HCT116 (cell line): ENCODE measurements at regions of chr1 and their contacts with region 1.

Region 1: DNA sequence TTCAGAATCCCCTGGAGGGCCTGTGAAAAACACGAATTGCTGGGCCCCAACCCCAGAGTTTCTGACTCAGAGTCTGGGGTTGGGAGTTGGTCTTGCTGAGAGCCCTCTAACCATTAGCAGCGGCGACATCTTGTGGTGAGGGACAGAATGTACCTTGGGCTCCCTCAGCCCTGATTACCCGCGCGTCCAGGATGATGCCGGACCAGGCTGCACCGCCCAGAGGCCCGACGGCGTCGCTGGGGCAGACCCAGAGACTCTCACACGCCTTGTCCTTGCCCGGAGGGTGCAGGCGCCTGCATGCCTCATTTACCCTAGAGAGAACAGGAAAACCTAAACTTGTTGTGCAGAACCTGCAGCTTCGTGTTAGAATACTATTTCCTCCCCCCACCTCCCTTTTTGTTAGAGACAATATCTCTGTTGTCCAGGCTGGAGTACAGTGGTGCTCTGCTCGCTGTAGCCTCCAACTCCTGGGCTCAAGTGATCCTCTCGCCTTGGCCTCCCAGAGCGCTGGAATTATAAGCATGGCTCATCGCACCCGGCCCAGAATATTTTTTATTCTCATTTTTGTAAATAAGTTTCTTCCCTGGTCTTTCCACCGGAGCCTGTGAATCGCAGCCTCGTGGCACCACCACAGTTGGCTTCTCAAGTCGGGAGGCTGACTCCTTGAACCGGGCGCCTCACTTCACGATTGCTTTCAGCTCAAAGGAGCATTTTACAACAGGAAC is 22.2 kb upstream of the RD3 start:
- DNase-seq: peak; percentile 71
- ATAC-seq: peak; percentile 76
- H3K4me3 ChIP-seq: peak overlapping the region in 1 of 2 experiments; percentile 26; a peak in 1 of 4 replicates
- H3K27ac ChIP-seq: peak overlapping the region; percentile 51; the same call in 1 of the 2 replicates
- H3K4me1 ChIP-seq: peaks cover 36 to 46% of the 10 kb centered on the region in 2 experiments
- H3K27me3 ChIP-seq: no peaks in the 10 kb centered on the region
- CTCF ChIP-seq: peak; percentile 74 to 88 (median 80)
- POLR2A ChIP-seq: no peak
- RAD21 ChIP-seq: peak; percentile 96

Region 2: GRCh38 chr1:210407207-210407886 is 1106.8 kb before region 1 on chr1:
- CTCF ChIA-PET with region 1: no interaction called
- POLR2A ChIA-PET with region 1: no interaction called
- RAD21 ChIA-PET with region 1: no interaction called
- intact Hi-C with region 1: loop called (anchors 2 kb)
- DNase-seq: peak; percentile 27
- ATAC-seq: peak; percentile 92
- H3K4me3 ChIP-seq: no peak overlapping the region
- H3K27ac ChIP-seq: no peak overlapping the region
- H3K4me1 ChIP-seq: no peaks in the 10 kb centered on the region
- H3K27me3 ChIP-seq: no peaks in the 10 kb centered on the region
- CTCF ChIP-seq: peak; percentile 73 to 97 (median 88)
- POLR2A ChIP-seq: no peak
- RAD21 ChIP-seq: peak; percentile 91

Region 3: DNA sequence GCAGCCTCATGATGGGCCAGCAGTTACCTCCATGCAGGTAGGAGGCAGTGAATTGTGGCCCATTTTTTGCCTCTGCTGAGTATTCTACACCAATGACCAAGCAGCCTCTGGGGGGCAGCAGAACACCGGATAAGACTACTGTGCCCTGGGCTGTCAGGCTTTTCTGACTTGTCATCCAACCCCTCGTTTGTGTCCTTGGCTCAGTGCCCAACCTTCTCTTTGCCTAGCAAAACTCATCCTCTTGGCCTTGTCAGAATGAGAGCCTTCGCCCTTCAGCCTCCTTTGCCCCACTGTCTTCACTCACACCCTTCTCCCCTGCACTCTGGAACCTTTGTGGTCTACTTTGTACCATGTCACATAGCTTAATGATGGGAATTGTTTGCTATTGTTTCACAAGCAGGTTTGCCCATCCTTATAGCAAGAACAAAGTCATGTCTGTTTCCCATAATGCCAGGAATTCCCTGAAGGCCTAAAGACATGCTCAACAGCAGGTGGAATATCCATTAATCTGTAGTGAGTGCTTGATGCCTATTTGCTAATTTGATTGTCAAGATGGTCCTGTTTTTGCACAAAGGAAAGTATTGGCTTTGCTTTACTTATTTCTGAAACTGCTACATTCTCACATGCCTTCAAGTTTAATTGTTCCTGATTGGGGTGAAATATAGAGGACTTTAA is 929.6 kb before region 1 on chr1:
- CTCF ChIA-PET with region 1: no interaction called
- POLR2A ChIA-PET with region 1: no interaction called
- RAD21 ChIA-PET with region 1: no interaction called
- intact Hi-C with region 1: loop called (anchors 5 kb)
- DNase-seq: peak; percentile 54
- ATAC-seq: peak; percentile 99
- H3K4me3 ChIP-seq: no peak overlapping the region
- H3K27ac ChIP-seq: no peak overlapping the region
- H3K4me1 ChIP-seq: no peaks in the 10 kb centered on the region
- H3K27me3 ChIP-seq: peaks cover 17% of the 10 kb centered on the region; the same call in 1 of the 2 replicates
- CTCF ChIP-seq: peak; percentile 74 to 82 (median 76)
- POLR2A ChIP-seq: no peak
- RAD21 ChIP-seq: peak; percentile 92

Region 4: GRCh38 chr1:211258756-211259637 is 255.2 kb before region 1 on chr1 and contains the start of gene RCOR3:
- CTCF ChIA-PET with region 1: interaction called, 3 read pairs
- POLR2A ChIA-PET with region 1: no interaction called
- RAD21 ChIA-PET with region 1: no interaction called
- intact Hi-C with region 1: loop called (anchors 2 kb)
- DNase-seq: peak; percentile 72
- ATAC-seq: peak; percentile 81
- H3K4me3 ChIP-seq: peak within 1 kb of the TSS; percentile 72 to 91
- H3K27ac ChIP-seq: peak within 1 kb of the TSS; percentile 96
- H3K4me1 ChIP-seq: peaks cover 14 to 21% of the 10 kb centered on the region in 2 experiments
- H3K27me3 ChIP-seq: no peaks in the 10 kb centered on the region
- CTCF ChIP-seq: peak; percentile 33 to 51 (median 49); a peak in 5 of 6 replicates
- POLR2A ChIP-seq: peak; percentile 12
- RAD21 ChIP-seq: 0 out of 2 replicates have a peak, but pooled peaks have one; percentile 10
- total RNA-seq, gene RCOR3: 25.7 TPM

Region 5: DNA sequence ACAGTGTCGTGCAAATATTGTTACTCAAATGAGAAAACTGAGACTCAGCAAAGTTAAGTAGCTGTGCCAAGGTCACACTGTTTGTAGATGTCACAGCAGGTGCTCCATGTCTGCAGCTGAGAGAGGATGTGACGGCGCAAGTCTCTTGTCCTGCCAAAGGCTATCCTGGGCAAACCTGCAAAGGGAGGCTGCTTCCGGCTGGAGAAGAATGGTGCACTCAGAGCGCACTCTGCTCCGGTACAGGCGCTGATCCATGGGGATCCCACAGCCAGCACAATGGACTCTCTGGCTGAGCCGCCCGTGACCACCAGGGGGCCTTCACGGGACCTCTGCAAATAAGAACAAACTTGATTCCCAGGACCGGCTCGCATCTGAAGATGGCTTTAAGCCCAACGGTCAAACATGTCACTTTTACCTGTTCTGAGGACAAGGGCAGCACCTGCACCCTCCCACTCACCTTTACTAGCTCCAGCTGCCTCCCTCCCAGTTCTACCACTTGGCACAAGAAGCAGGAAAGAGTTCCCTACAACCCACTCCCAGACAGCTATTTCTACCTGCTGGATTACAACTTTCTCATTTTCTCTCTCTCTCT is 44.2 kb before region 1 on chr1:
- CTCF ChIA-PET with region 1: interaction called, 8 read pairs
- POLR2A ChIA-PET with region 1: no interaction called
- RAD21 ChIA-PET with region 1: interaction called in 1 of 2 experiments, 8 read pairs
- intact Hi-C with region 1: loop called (anchors 2 kb)
- DNase-seq: peak; percentile 72
- ATAC-seq: peak; percentile 100
- H3K4me3 ChIP-seq: no peak overlapping the region
- H3K27ac ChIP-seq: no peak overlapping the region
- H3K4me1 ChIP-seq: peaks cover 3 to 11% of the 10 kb centered on the region in 2 experiments; a peak in 3 of 4 replicates
- H3K27me3 ChIP-seq: no peaks in the 10 kb centered on the region
- CTCF ChIP-seq: peak; percentile 83 to 90 (median 87)
- POLR2A ChIP-seq: no peak
- RAD21 ChIP-seq: peak; percentile 72

Region 6: GRCh38 chr1:211571998-211572397 is 57.8 kb after region 1 on chr1:
- CTCF ChIA-PET with region 1: no interaction called
- POLR2A ChIA-PET with region 1: no interaction called
- RAD21 ChIA-PET with region 1: no interaction called
- intact Hi-C with region 1: no loop called
- DNase-seq: no peak
- ATAC-seq: no peak
- H3K4me3 ChIP-seq: no peak overlapping the region
- H3K27ac ChIP-seq: no peak overlapping the region
- H3K4me1 ChIP-seq: peaks cover 7 to 17% of the 10 kb centered on the region in 2 experiments; a peak in 3 of 4 replicates
- H3K27me3 ChIP-seq: no peaks in the 10 kb centered on the region
- CTCF ChIP-seq: no peak
- POLR2A ChIP-seq: no peak
- RAD21 ChIP-seq: no peak